ENCODE measurements at regions of chr9 and their contacts with region 1.

Region 1: DNA sequence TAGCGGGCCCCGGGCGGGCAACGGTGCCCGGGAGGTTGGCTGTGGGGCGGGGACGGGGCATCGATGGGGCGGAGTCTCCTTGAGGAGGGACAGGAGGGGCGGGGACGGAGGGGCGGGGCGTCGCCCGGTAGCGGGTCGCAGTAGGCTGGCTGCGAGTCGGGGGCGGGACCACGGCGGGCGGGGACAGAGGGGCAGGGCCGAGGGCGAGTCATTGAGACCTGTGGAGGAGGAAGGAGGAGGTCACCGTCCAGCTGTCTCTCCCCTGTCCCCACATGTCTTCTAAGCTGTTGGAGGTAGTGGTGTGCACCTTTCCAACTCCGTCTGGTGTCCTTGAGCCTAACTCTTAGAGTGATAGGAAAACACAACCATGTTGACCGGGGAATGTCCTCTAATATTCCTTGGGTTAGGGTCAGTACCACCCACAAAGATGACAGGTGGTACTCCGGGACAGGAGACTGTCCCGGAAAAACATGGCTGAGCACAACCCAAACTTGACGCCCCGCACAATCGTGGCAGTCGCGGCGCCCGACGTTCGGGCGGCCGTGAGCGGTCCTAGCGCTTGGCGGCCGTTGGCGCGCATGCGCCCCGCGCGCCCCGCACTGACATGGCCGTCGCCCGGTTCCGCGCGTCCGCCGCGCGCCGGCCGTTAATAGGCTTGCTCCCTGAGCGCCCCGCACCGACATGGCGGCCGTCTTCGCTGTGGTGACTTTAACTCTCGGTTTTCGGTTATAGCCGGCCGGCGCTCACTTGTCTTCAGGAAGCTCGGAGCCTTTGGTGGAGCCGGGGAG is at the starts of genes CRAT and PTPA:
- DNase-seq: peak; percentile 98 to 99 (median 99)
- ATAC-seq: peak; percentile 90 to 94 (median 91)
- H3K4me3 ChIP-seq: peak within 1 kb of the TSS; percentile 77 to 100 (median 88)
- H3K27ac ChIP-seq: peak within 1 kb of the TSS; percentile 91 to 100 (median 97)
- H3K4me1 ChIP-seq: peaks cover 0 to 51% (median 26%) of the 10 kb centered on the region in 12 donors
- H3K27me3 ChIP-seq: no peaks in the 10 kb centered on the region
- CTCF ChIP-seq: no peak
- POLR2A ChIP-seq: peak; percentile 98 to 99
- total RNA-seq, gene CRAT: 50.8 to 126 (median 68.2) TPM
- total RNA-seq, gene PTPA: 96.0 to 212 (median 172) TPM

Region 2: DNA sequence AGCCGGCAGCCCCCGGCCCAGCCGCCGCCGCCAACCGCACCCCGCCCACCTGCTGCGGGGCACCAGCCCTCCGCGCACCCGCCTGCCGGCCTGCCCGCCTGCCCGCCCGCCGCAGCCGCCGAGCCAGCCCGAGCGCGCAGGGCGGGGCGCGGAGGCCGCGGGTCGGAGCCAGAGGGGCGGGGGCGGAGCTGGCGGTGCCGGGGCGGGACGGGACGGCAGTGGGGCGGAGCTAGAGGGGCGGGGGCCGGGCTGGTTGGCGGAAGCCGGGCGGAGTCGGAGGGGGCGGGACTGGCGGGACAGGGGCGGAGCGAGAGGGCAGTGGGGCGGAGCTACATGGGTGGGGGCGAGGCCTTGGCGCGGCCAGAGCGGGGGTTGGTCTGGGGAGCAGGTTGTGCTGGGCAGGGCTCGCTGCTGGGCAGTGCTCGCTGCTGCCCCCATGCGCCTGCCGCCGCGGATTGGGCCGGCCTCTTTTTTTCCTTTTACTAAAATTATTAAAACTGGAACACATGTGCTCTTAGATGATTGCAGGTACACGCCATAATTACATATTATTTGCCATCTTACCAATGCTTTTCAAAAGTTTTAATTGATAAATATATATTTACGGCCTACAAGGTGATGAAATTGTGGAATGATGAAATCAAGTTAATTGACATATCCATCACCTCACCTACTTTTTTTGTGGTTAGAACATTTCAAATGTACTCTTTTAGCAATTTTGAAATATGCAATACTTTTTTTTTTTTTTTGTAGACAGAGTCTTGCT is 82.6 kb before region 1 on chr9 and contains the start of gene SH3GLB2:
- intact Hi-C with region 1: loop called in 1 of 10 experiments (anchors 5 kb)
- DNase-seq: peak; percentile 95 to 99 (median 96)
- ATAC-seq: peak; percentile 97 to 99 (median 98)
- H3K4me3 ChIP-seq: peak within 1 kb of the TSS; percentile 65 to 96 (median 80)
- H3K27ac ChIP-seq: peak within 1 kb of the TSS in 11 of 12 donors; percentile 12 to 81 (median 63)
- H3K4me1 ChIP-seq: peaks cover 0 to 35% (median 18%) of the 10 kb centered on the region in 12 donors
- H3K27me3 ChIP-seq: no peaks in the 10 kb centered on the region
- CTCF ChIP-seq: peak; percentile 84 to 97 (median 92)
- POLR2A ChIP-seq: no peak
- total RNA-seq, gene SH3GLB2: 27.3 to 42.7 (median 36.5) TPM

Region 3: GRCh38 chr9:129202613-129203555 is 92.0 kb after region 1 on chr9:
- intact Hi-C with region 1: no loop called
- DNase-seq: peak; percentile 89 to 95 (median 91)
- ATAC-seq: peak; percentile 75 to 95 (median 90)
- H3K4me3 ChIP-seq: peak overlapping the region; percentile 54 to 95 (median 78)
- H3K27ac ChIP-seq: peak overlapping the region; percentile 89 to 100 (median 97)
- H3K4me1 ChIP-seq: peaks cover 0 to 22% (median 8%) of the 10 kb centered on the region in 12 donors
- H3K27me3 ChIP-seq: no peaks in the 10 kb centered on the region
- CTCF ChIP-seq: no peak
- POLR2A ChIP-seq: peak in 1 of 2 donors; percentile 58